Mammary epithelial cell (primary cell): ENCODE measurements at regions of chr15 and their contacts with region 1.

Region 1: GRCh38 chr15:25438601-25439368 is at the start of gene UBE3A:
- DNase-seq: peak; percentile 90
- H3K4me3 ChIP-seq: peak within 1 kb of the TSS; percentile 92 to 99 (median 94)
- H3K27ac ChIP-seq: peak within 1 kb of the TSS; percentile 86
- H3K4me1 ChIP-seq: peaks cover 7% of the 10 kb centered on the region
- H3K27me3 ChIP-seq: no peaks in the 10 kb centered on the region
- CTCF ChIP-seq: peak in 1 of 2 donors; percentile 23
- total RNA-seq, gene UBE3A: 93.0 to 98.9 TPM

Region 2: DNA sequence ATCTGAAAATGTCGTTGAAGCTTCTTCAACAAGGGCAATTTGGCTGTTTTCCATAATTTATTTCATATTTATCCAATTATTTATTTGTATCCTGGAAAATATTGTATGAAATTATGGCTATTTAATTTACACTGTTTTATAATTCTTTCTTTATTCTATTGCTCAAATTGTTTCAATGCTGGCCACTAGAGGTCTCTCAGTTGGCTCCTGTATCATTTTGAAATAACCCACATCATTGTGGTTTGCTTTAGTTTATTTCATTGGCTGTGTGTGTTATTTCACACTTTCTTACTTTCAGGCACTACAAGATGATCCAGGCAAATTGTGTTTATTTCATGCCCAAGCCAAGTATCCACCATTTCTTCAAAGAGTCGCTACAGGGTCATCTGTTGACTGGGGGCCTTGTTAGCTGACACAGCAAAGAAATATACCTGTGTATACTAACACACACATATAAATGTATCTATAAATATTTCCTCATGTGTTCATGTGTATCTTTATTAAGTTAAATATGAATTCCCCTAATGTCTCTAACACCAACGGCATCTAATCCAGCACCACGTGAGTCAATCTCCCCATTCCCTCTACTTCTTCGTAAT is 677.0 kb before region 1 on chr15:
- CTCF ChIA-PET with region 1: no interaction called
- dilution Hi-C with region 1: no loop called
- in situ Hi-C with region 1: no loop called
- intact Hi-C with region 1: loop called (anchors 2 kb)
- DNase-seq: no peak
- H3K4me3 ChIP-seq: no peak overlapping the region
- H3K27ac ChIP-seq: no peak overlapping the region
- H3K4me1 ChIP-seq: no peaks in the 10 kb centered on the region
- H3K27me3 ChIP-seq: no peaks in the 10 kb centered on the region
- CTCF ChIP-seq: peak; percentile 18 to 38

Region 3: DNA sequence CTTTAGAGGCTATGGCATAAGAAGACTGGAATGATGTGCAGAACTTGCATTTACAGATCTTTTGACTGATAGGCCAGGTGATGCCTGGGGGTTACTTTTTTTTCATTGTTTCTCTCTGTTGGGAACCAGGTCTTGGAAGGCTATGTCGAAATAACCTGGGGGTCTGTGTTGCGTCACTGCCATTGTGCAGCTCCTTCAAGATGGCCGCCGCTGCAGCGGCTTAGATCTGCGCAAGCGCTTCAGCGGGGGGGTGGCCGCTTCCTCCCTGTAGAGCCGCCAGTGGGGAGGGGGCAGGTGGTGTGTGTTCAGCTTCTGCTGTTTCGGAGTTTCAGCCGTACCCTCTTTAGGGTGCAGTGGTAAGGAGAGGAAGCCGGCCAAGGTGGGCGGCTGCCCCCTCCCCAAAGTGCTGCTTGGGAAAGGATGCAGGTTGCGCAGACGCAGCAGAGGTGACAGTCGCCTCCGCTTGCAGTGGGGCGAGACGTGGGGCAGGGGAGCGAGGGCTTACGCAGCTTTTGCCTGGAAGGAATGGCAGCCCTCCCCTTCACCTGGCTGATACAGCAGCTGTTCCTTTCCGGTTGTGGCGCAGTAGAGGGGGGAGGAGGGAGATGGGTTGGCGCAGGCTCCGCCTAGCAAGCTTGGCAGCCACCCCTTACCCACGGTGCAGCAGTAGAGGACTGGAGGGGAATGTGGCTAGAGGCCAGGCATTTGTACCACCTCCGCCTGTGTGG is 482.5 kb before region 1 on chr15:
- CTCF ChIA-PET with region 1: no interaction called
- dilution Hi-C with region 1: no loop called
- in situ Hi-C with region 1: no loop called
- intact Hi-C with region 1: loop called (anchors 2 kb)
- DNase-seq: peak; percentile 61
- H3K4me3 ChIP-seq: peak overlapping the region; percentile 47 to 76 (median 70)
- H3K27ac ChIP-seq: peak overlapping the region; percentile 26
- H3K4me1 ChIP-seq: no peaks in the 10 kb centered on the region
- H3K27me3 ChIP-seq: no peaks in the 10 kb centered on the region
- CTCF ChIP-seq: no peak

Region 4: DNA sequence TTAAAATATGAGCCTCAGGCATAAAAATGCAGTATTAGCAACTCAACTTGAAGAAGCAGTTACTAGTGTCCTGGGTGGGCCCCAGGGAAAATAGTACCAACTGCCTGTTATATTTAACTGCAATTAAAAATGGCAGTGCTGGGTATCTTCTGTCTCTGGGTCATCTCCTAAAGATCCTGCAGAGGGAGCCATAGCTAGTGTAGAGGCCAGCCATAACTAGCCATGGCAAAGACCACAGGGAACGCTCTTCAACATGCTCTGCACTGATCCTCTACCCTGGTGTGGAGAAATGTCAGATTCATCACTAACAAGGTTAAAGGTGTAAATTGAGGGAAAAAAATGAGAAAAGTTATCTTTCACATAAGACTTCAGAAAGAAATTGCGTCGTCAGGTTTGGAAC is 302.7 kb before region 1 on chr15:
- CTCF ChIA-PET with region 1: no interaction called
- dilution Hi-C with region 1: no loop called
- in situ Hi-C with region 1: no loop called
- intact Hi-C with region 1: loop called (anchors 10 kb)
- DNase-seq: no peak
- H3K4me3 ChIP-seq: no peak overlapping the region
- H3K27ac ChIP-seq: no peak overlapping the region
- H3K4me1 ChIP-seq: no peaks in the 10 kb centered on the region
- H3K27me3 ChIP-seq: no peaks in the 10 kb centered on the region
- CTCF ChIP-seq: peak in 1 of 2 donors; percentile 35

Region 5: DNA sequence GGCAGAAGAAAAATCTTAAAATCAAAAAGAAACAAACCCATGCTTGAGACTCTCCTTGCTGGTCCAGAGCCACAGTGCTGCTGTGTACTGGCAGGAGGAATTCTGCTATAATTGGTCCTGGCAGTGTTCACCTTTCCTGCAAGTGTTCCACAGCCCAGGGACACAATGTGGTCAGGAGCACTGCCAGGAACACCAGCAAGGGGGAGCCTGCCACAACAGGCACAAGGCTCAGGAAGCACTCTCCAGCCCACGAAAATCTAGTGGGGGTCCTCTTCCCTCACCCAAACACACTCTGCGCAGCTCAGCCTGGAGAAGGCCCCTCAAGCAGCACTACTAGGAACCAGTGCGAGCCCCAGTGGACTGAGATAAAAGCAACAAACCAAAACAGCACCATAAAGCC is 92.8 kb before region 1 on chr15:
- CTCF ChIA-PET with region 1: no interaction called
- dilution Hi-C with region 1: no loop called
- in situ Hi-C with region 1: no loop called
- intact Hi-C with region 1: loop called (anchors 1 kb)
- DNase-seq: peak; percentile 42
- H3K4me3 ChIP-seq: no peak overlapping the region
- H3K27ac ChIP-seq: no peak overlapping the region
- H3K4me1 ChIP-seq: peaks cover 11% of the 10 kb centered on the region
- H3K27me3 ChIP-seq: no peaks in the 10 kb centered on the region
- CTCF ChIP-seq: peak; percentile 9 to 68

Region 6: GRCh38 chr15:25543196-25543595 is 104.4 kb after region 1 on chr15:
- CTCF ChIA-PET with region 1: no interaction called
- dilution Hi-C with region 1: loop called (anchors 25 kb)
- in situ Hi-C with region 1: no loop called
- intact Hi-C with region 1: no loop called
- DNase-seq: no peak
- H3K4me3 ChIP-seq: no peak overlapping the region
- H3K27ac ChIP-seq: no peak overlapping the region
- H3K4me1 ChIP-seq: no peaks in the 10 kb centered on the region
- H3K27me3 ChIP-seq: no peaks in the 10 kb centered on the region
- CTCF ChIP-seq: no peak

Region 7: DNA sequence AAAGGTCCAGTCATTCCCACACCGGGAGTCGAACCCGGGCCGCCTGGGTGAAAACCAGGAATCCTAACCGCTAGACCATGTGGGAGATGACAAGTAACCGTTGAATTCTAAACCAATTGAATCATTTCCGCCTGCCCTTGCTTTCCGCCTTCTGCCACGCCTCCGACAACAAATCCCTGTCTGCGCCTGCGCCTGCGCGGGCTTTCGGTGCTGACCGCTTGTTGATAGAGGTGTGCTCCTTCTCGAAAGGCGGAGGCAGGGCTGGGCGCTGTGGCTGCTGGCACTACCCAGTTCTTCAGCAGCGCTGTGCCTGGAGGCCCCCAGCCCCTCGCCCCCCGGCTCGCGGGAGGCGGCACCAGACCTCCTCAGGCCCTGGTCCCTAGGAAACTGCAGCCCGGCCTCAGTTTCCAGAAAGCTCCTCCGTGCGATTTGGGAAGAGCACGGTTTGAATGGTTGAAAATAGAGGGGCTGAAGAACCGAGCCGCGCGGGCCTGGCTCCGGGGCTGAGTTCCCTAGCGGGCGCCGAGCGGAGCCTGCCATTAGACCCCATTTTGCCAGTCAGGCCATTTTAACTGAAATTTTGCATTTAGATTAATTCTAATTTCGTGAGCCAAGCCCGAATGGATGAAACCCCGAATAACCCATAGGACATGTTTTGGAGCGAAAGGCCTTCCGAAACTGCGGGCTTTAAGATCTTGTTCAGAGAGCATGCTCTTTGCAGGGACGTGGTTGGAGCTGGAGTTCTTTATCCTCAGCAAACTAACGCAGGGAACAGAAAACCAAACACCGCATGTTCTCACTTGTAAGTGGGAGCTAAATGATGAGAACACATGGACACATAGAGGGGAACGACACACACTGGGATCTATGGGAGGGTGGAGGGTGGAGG is 643.7 kb after region 1 on chr15:
- CTCF ChIA-PET with region 1: no interaction called
- dilution Hi-C with region 1: no loop called
- in situ Hi-C with region 1: loop called in 1 of 2 experiments (anchors 25 kb)
- intact Hi-C with region 1: no loop called
- DNase-seq: peak; percentile 91
- H3K4me3 ChIP-seq: peak overlapping the region; percentile 54 to 81 (median 72)
- H3K27ac ChIP-seq: peak overlapping the region; percentile 11
- H3K4me1 ChIP-seq: peaks cover 9% of the 10 kb centered on the region
- H3K27me3 ChIP-seq: no peaks in the 10 kb centered on the region
- CTCF ChIP-seq: no peak